Vagina (tissue), 2 donors: ENCODE measurements at regions of chr1 and their contacts with region 1.

Region 1: GRCh38 chr1:246681900-246682299 is 42.3 kb upstream of the SCCPDH start:
- DNase-seq: no peak
- H3K4me3 ChIP-seq: no peak overlapping the region
- H3K27ac ChIP-seq: peak overlapping the region; percentile 61
- H3K4me1 ChIP-seq: peaks cover 31% of the 10 kb centered on the region
- H3K27me3 ChIP-seq: no peaks in the 10 kb centered on the region
- CTCF ChIP-seq: no peak
- POLR2A ChIP-seq: no peak

Region 2: GRCh38 chr1:246647113-246647512 is 34.8 kb before region 1 on chr1:
- intact Hi-C with region 1: loop called (anchors 5 kb)
- DNase-seq: no peak
- H3K4me3 ChIP-seq: no peak overlapping the region
- H3K27ac ChIP-seq: peak overlapping the region; percentile 20
- H3K4me1 ChIP-seq: peaks cover 9% of the 10 kb centered on the region
- H3K27me3 ChIP-seq: no peaks in the 10 kb centered on the region
- CTCF ChIP-seq: peak in 1 of 3 experiments; percentile 18
- POLR2A ChIP-seq: no peak

Region 3: GRCh38 chr1:246947255-246947654 is 265.4 kb after region 1 on chr1:
- intact Hi-C with region 1: no loop called
- DNase-seq: peak in 1 of 2 donors; percentile 93
- H3K4me3 ChIP-seq: no peak overlapping the region
- H3K27ac ChIP-seq: peak overlapping the region; percentile 60
- H3K4me1 ChIP-seq: no peaks in the 10 kb centered on the region
- H3K27me3 ChIP-seq: no peaks in the 10 kb centered on the region
- CTCF ChIP-seq: no peak
- POLR2A ChIP-seq: no peak